ENCODE measurements at regions of chr19 and their contacts with region 1.

Region 1: GRCh38 chr19:41439441-41440222 is at the start of gene DMAC2:
- DNase-seq: peak; percentile 78
- ATAC-seq: peak; percentile 97
- H3K4me3 Mint-ChIP-seq: no peak within 1 kb of the TSS
- H3K27ac Mint-ChIP-seq: no peak within 1 kb of the TSS
- H3K4me1 Mint-ChIP-seq: peaks cover 7% of the 10 kb centered on the region
- H3K27me3 Mint-ChIP-seq: no peaks in the 10 kb centered on the region
- CTCF ChIP-seq: no peak
- total RNA-seq, gene DMAC2: 38.2 and 45.7 TPM in 2 replicates

Region 2: GRCh38 chr19:41403251-41403957 is 36.2 kb before region 1 on chr19:
- CTCF ChIA-PET with region 1: no interaction called
- POLR2A ChIA-PET with region 1: no interaction called
- intact Hi-C with region 1: no loop called
- DNase-seq: no peak
- ATAC-seq: no peak
- H3K4me3 Mint-ChIP-seq: no peak overlapping the region
- H3K27ac Mint-ChIP-seq: no peak overlapping the region
- H3K4me1 Mint-ChIP-seq: peaks cover 19% of the 10 kb centered on the region
- H3K27me3 Mint-ChIP-seq: no peaks in the 10 kb centered on the region
- CTCF ChIP-seq: no peak

Region 3: DNA sequence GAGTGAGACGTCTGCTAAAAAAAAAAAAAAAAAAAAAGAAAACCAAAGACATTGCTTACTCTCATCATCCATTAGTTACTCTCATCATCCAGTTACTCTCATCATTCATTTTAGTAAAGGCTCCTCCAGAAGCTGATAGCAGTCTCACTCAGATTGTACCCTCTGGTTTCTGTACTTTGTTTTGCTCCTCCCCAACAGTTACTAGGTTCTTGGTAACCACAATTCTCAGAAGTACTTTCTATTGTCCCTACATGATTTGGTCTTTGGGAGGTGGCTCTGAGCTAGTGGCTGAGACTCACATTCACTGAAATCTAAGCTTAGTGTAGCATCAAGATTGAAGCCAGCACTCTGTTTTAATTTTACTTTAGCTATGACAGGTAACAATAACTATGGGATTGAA is 17.6 kb after region 1 on chr19:
- CTCF ChIA-PET with region 1: no interaction called
- POLR2A ChIA-PET with region 1: no interaction called
- intact Hi-C with region 1: no loop called
- DNase-seq: no peak
- ATAC-seq: peak; percentile 47
- H3K4me3 Mint-ChIP-seq: no peak overlapping the region
- H3K27ac Mint-ChIP-seq: peak overlapping the region; percentile 50
- H3K4me1 Mint-ChIP-seq: peaks cover 29% of the 10 kb centered on the region
- H3K27me3 Mint-ChIP-seq: peaks cover 8% of the 10 kb centered on the region
- CTCF ChIP-seq: no peak

Region 4: GRCh38 chr19:41575998-41576397 is 136.4 kb after region 1 on chr19 and contains the start of gene CEACAM21:
- CTCF ChIA-PET with region 1: interaction called, 344 read pairs
- POLR2A ChIA-PET with region 1: interaction called, 13 read pairs
- intact Hi-C with region 1: no loop called
- DNase-seq: peak; percentile 52
- ATAC-seq: peak; percentile 100
- H3K4me3 Mint-ChIP-seq: peak within 1 kb of the TSS; percentile 81
- H3K27ac Mint-ChIP-seq: peak within 1 kb of the TSS; percentile 91
- H3K4me1 Mint-ChIP-seq: peaks cover 24% of the 10 kb centered on the region
- H3K27me3 Mint-ChIP-seq: no peaks in the 10 kb centered on the region
- CTCF ChIP-seq: no peak
- total RNA-seq, gene CEACAM21: 11.7 and 12.0 TPM in 2 replicates

Measured in activated B cell treated with CpG ODN at 0.5 μM for 24 hours (primary cell).